Activated naive CD4-positive, alpha-beta T cell treated with anti-CD3 and anti-CD28 coated beads for 36 hours (primary cell): ENCODE measurements at regions of chr1 and their contacts with region 1.

Region 1: DNA sequence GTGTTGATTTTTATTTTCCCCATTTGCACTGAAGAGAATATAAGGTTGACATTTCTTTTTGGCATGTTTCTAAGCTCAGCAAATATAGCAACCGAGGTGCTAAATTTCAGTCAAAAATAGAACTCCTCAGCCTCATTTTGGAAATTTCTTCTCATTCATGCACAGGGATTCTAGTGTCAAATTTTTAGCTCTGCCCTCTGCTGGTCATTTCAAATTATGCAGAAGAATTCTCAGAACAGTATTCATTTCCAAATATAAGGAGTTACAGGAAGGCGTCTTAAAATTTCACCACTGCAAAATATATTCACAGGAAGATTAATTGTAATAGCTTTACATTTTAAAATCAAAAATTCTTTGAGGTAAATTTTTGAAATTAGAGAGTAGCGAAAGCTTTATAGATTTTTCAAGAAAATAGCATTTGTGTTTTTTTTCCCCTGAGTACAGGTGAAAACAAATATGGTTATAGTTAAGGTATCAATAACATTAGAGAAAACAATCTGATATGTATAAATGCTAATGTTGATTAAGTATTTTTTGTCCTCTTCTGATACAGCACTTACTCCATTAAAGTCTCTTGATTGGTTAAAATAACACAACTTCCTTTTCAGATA is 57.9 kb downstream of the FMN2 start:
- DNase-seq: no peak
- H3K4me3 Mint-ChIP-seq: no peak overlapping the region
- H3K27ac Mint-ChIP-seq: no peak overlapping the region
- H3K4me1 Mint-ChIP-seq: no peaks in the 10 kb centered on the region
- H3K27me3 Mint-ChIP-seq: peaks cover 8% of the 10 kb centered on the region

Region 2: DNA sequence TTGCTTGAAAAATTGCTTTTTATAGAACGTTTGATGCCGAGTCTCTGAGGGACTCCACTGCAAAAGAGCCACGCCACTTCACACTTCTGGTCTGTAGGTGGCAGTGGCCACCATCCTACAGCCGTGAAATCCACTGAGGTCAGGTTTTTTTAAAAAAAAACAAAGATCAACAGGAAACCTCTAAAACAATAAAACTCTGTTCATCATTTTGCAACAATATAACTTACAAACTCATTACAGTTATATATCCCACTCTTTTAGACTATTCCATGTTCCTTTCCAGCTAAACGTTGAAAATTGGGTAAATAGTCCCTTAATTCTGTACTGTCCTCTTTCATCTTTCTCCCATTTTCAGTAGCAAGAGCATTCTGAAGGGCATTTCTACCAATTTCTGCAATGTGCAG is 122.5 kb before region 1 on chr1:
- CTCF ChIA-PET with region 1: interaction called, 8 read pairs
- intact Hi-C with region 1: loop called (anchors 1 kb)
- DNase-seq: peak; percentile 28
- H3K4me3 Mint-ChIP-seq: no peak overlapping the region
- H3K27ac Mint-ChIP-seq: no peak overlapping the region
- H3K4me1 Mint-ChIP-seq: no peaks in the 10 kb centered on the region
- H3K27me3 Mint-ChIP-seq: peaks cover 5% of the 10 kb centered on the region